ENCODE measurements at regions of chr4 and their contacts with region 1.

Region 1: DNA sequence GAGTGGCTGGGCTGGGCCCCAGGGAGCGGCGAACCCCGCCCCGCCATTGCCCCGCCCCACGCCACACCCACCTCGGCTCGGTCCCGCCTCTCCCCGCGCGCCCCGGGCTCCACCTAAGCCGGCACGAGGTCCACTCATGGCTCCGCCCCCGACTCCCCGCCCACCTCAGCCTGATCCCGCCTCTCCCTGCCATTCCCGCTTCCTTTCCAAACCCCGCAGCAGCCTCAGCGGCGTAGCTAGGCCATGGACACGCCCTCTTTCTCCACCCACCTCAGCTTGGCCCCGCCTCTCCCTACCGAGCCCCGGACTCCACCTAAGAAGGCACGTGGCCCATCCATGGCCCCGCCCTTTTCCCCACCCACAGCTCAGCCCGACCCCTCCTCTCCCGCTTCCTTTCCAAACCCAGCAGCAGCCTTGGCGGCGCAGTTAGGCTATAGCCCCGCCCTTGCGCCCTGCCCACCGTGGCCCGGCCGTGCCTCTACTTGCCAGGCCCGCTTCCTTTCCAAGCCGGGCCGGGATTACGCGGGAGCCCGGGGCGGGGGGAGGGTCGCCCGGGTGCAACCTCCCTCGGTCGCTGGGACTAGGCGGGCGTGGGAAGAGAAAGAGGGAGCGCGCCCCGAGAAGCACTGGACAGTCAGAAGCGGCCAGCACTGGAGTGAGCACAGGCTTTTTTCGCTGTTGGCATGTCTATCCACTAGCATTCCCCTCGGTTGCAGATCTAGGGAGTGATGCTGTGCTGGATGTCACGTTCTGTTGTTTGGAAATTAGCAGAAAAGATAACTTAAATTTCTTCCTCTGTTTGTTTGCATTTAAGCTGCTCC is at the start of gene RELL1:
- DNase-seq: peak; percentile 99
- H3K4me3 Mint-ChIP-seq: peak within 1 kb of the TSS; percentile 85
- H3K27ac Mint-ChIP-seq: peak within 1 kb of the TSS; percentile 92
- H3K4me1 Mint-ChIP-seq: peaks cover 29% of the 10 kb centered on the region
- H3K27me3 Mint-ChIP-seq: no peaks in the 10 kb centered on the region
- CTCF ChIP-seq: no peak
- total RNA-seq, gene RELL1: 28.6 and 34.0 TPM in 2 replicates

Region 2: GRCh38 chr4:37648096-37648817 is 38.3 kb before region 1 on chr4:
- CTCF ChIA-PET with region 1: no interaction called
- POLR2A ChIA-PET with region 1: interaction called, 3 read pairs
- intact Hi-C with region 1: loop called (anchors 2 kb)
- DNase-seq: peak; percentile 97
- H3K4me3 Mint-ChIP-seq: peak overlapping the region; percentile 52
- H3K27ac Mint-ChIP-seq: peak overlapping the region; percentile 81
- H3K4me1 Mint-ChIP-seq: peaks cover 5% of the 10 kb centered on the region
- H3K27me3 Mint-ChIP-seq: no peaks in the 10 kb centered on the region
- CTCF ChIP-seq: no peak

Region 3: GRCh38 chr4:37666625-37667071 is 19.9 kb before region 1 on chr4:
- CTCF ChIA-PET with region 1: no interaction called
- POLR2A ChIA-PET with region 1: interaction called, 16 read pairs
- intact Hi-C with region 1: loop called (anchors 1 kb)
- DNase-seq: peak; percentile 95
- H3K4me3 Mint-ChIP-seq: peak overlapping the region; percentile 63
- H3K27ac Mint-ChIP-seq: peak overlapping the region; percentile 97
- H3K4me1 Mint-ChIP-seq: peaks cover 37% of the 10 kb centered on the region
- H3K27me3 Mint-ChIP-seq: no peaks in the 10 kb centered on the region
- CTCF ChIP-seq: no peak

Region 4: DNA sequence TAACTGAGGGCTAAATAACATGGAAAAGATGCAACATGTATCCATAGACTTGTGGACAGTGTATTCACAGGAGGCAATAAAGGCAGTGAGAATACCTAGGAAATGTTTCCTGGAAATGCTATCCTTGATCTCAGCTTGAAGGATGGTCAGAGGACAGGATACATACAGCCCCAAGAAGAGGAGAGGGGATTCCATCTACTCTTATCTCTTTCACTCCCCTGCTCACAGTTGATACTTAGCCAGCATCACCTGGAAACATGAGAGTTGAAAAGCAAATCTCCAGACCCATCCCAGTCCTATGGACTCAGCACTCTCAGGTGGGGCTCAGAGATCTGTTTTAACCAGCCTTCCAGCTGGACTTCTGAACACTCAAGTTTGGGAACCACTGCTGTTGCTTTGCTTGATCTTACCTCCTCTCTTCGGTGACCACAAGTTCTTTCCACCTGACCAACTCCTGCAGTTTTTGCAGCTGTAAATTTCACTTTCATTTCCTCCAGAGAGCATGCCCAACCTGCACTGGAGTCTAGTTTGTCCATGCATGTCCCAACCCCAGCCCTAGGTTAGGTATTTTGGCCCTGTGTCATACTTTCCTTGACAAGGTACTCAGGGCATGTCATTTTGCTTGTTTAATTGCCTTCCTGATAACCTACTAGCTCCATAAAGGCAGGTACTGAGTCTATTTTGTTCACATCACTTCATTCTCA is 10.8 kb before region 1 on chr4:
- CTCF ChIA-PET with region 1: no interaction called
- POLR2A ChIA-PET with region 1: interaction called, 16 read pairs
- intact Hi-C with region 1: no loop called
- DNase-seq: no peak
- H3K4me3 Mint-ChIP-seq: peak overlapping the region; percentile 45
- H3K27ac Mint-ChIP-seq: no peak overlapping the region
- H3K4me1 Mint-ChIP-seq: peaks cover 21% of the 10 kb centered on the region
- H3K27me3 Mint-ChIP-seq: no peaks in the 10 kb centered on the region
- CTCF ChIP-seq: no peak

Region 5: GRCh38 chr4:37758226-37758625 is 71.6 kb after region 1 on chr4:
- CTCF ChIA-PET with region 1: no interaction called
- POLR2A ChIA-PET with region 1: interaction called, 15 read pairs
- intact Hi-C with region 1: no loop called
- DNase-seq: peak; percentile 92
- H3K4me3 Mint-ChIP-seq: peak overlapping the region; percentile 48
- H3K27ac Mint-ChIP-seq: peak overlapping the region; percentile 94
- H3K4me1 Mint-ChIP-seq: peaks cover 29% of the 10 kb centered on the region
- H3K27me3 Mint-ChIP-seq: no peaks in the 10 kb centered on the region
- CTCF ChIP-seq: no peak

Region 6: DNA sequence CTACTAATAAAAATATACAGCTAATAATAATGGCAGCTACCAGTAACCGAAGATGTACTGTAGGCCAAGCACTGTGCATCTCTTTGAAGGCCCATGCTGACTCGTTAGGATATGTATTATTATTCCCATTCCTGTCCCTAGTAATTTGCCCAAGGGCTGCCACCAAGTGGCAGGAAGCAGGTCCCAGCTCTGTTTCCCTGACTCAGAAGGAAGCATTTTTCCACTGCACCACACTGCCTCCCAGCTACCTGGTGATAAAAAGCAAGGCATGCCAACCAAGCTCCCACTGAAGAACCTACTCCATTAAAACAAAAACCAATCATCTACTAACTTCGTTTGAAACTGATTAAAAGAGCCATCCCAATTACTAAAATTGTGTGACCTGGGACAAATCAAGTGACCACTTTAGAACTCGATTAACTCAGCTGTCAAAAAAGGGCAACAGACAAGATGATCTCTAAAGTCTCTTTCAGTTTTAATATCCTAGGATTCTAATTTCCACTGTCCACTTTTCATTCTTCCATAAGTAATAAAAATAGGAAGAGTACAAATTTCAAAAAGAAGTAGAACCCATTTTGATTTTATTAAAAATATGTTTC is 115.6 kb after region 1 on chr4:
- CTCF ChIA-PET with region 1: interaction called, 4 read pairs
- POLR2A ChIA-PET with region 1: no interaction called
- intact Hi-C with region 1: loop called (anchors 5 kb)
- DNase-seq: peak; percentile 87
- H3K4me3 Mint-ChIP-seq: no peak overlapping the region
- H3K27ac Mint-ChIP-seq: no peak overlapping the region
- H3K4me1 Mint-ChIP-seq: peaks cover 10% of the 10 kb centered on the region
- H3K27me3 Mint-ChIP-seq: no peaks in the 10 kb centered on the region
- CTCF ChIP-seq: peak; percentile 53

Region 7: GRCh38 chr4:37994569-37994968 is 308.0 kb after region 1 on chr4:
- CTCF ChIA-PET with region 1: no interaction called
- POLR2A ChIA-PET with region 1: no interaction called
- intact Hi-C with region 1: no loop called
- DNase-seq: no peak
- H3K4me3 Mint-ChIP-seq: no peak overlapping the region
- H3K27ac Mint-ChIP-seq: no peak overlapping the region
- H3K4me1 Mint-ChIP-seq: no peaks in the 10 kb centered on the region
- H3K27me3 Mint-ChIP-seq: no peaks in the 10 kb centered on the region
- CTCF ChIP-seq: no peak

Measured in MCF 10A (cell line).